Gastrocnemius medialis (tissue), 4 donors: ENCODE measurements at regions of chr2 and their contacts with region 1.

Region 1: GRCh38 chr2:56240210-56240609 is 56.4 kb downstream of the CCDC85A start:
- DNase-seq: no peak
- ATAC-seq: no peak
- H3K4me3 ChIP-seq: no peak overlapping the region
- H3K27ac ChIP-seq: no peak overlapping the region
- H3K4me1 ChIP-seq: no peaks in the 10 kb centered on the region
- H3K27me3 ChIP-seq: no peaks in the 10 kb centered on the region
- CTCF ChIP-seq: no peak
- POLR2A ChIP-seq: no peak

Region 2: GRCh38 chr2:56167616-56168562 is 72.3 kb before region 1 on chr2:
- in situ Hi-C with region 1: no loop called
- intact Hi-C with region 1: loop called (anchors 2 kb)
- DNase-seq: no peak
- ATAC-seq: peak; percentile 35 to 52
- H3K4me3 ChIP-seq: no peak overlapping the region
- H3K27ac ChIP-seq: peak overlapping the region in 3 of 4 donors; percentile 16 to 38 (median 23)
- H3K4me1 ChIP-seq: no peaks in the 10 kb centered on the region
- H3K27me3 ChIP-seq: no peaks in the 10 kb centered on the region
- CTCF ChIP-seq: no peak
- POLR2A ChIP-seq: no peak

Region 3: DNA sequence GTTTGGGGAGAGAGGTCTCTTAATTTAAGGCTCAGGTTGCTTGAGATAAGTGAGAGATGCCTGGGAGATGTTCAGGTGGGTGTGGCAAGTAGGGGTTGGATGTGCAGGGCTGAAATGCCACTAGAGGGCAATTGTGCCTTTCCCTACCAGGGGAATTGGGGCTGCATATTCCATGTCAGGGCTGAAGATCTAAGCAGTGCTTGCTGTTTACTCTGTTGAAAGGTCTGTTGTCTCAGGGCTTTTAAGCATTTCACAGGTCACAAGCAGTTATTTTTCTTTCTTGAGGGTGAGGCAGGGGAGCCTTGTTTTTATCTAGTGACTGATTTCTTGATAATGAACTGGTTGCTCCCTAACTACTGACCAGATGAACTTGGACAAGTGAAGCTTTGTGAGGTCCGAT is 48.5 kb before region 1 on chr2:
- in situ Hi-C with region 1: no loop called
- intact Hi-C with region 1: no loop called
- DNase-seq: no peak
- ATAC-seq: no peak
- H3K4me3 ChIP-seq: no peak overlapping the region
- H3K27ac ChIP-seq: no peak overlapping the region
- H3K4me1 ChIP-seq: peaks cover 0 to 3% of the 10 kb centered on the region in 2 donors
- H3K27me3 ChIP-seq: no peaks in the 10 kb centered on the region
- CTCF ChIP-seq: peak in 3 of 5 experiments; percentile 20 to 44 (median 43)
- POLR2A ChIP-seq: no peak